Ascending aorta (tissue), 2 donors: ENCODE measurements at regions of chr10 and their contacts with region 1.

Region 1: GRCh38 chr10:124741281-124741921 is 2.8 kb downstream of the FAM53B start:
- DNase-seq: peak in 1 of 2 donors; percentile 93
- H3K4me3 ChIP-seq: peak overlapping the region; percentile 31 to 80
- H3K27ac ChIP-seq: peak overlapping the region; percentile 63 to 73
- H3K4me1 ChIP-seq: peaks cover 10 to 57% of the 10 kb centered on the region in 2 donors
- H3K27me3 ChIP-seq: no peaks in the 10 kb centered on the region
- CTCF ChIP-seq: peak; percentile 83 to 92 (median 87)

Region 2: DNA sequence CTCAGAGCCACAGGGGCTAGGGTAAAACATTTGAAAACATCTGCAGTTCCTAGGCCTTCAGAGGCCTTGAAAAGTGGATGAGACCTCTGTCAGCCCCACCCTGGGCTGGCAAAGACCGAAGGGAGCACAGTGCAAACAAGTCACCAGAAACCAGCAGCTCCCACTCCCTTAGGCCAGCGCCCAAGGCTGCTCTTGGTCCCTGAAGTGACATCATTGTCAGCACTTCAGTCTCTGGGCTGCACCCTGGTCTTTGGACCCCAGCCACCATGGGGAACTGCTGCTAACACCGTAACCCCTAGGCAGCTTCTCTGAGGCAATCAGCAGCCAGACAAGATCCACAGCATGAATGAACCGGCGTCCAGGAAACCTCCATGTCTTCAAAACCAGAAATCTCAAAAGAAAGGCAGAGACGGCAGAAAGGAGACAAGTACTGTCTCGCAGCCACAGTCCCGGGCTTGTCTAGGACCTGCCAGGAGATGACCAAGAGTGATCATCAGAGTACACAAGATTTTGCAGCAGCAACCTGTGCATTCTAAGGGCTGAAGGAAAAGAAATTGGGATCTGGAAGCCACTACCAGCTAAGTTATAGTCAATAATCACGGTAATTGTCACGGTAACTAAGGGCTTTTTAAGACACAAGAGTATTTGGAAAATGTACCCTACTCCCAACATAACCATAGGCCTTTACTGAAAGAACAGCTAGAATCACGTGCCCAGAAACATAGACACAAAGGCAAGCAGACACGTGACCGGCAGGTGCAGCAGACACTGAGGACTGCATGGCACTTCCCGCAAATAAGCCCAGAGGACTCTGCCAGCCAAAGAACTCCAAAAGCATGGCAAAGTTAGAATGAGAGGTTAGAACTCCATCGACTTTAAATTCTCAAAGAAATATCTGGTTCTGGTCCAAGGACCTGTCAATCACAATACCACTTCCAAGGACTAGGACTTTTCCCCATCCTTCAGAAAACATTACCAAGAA is 873.1 kb before region 1 on chr10:
- intact Hi-C with region 1: loop called (anchors 10 kb)
- DNase-seq: peak in 1 of 2 donors; percentile 63
- H3K4me3 ChIP-seq: no peak overlapping the region
- H3K27ac ChIP-seq: peak overlapping the region; percentile 40 to 65
- H3K4me1 ChIP-seq: peaks cover 31 to 40% of the 10 kb centered on the region in 2 donors
- H3K27me3 ChIP-seq: no peaks in the 10 kb centered on the region
- CTCF ChIP-seq: no peak

Region 3: DNA sequence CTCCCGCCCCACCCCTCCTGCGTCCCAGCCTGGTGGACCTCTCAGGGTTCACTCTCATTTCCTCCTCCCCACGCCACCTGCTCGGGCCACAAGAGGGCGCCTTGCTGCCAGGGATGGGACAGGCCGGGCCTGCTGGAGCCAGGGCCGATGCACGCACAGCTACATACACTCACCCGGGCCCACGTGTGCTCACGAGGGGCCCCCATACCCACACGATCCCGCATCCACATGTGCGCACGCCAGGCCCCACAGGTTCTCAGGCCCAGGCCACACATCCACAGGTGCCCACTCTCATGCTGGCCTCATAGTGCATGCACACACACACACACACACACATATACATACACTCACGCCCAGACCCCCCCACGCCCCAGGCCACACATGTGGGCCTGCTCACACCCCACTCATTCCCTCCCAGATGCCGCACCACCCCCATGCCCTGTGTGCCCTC is 211.2 kb before region 1 on chr10:
- intact Hi-C with region 1: loop called (anchors 1 kb)
- DNase-seq: peak; percentile 52 to 91
- H3K4me3 ChIP-seq: no peak overlapping the region
- H3K27ac ChIP-seq: no peak overlapping the region
- H3K4me1 ChIP-seq: no peaks in the 10 kb centered on the region
- H3K27me3 ChIP-seq: no peaks in the 10 kb centered on the region
- CTCF ChIP-seq: peak; percentile 81 to 95 (median 88)

Region 4: DNA sequence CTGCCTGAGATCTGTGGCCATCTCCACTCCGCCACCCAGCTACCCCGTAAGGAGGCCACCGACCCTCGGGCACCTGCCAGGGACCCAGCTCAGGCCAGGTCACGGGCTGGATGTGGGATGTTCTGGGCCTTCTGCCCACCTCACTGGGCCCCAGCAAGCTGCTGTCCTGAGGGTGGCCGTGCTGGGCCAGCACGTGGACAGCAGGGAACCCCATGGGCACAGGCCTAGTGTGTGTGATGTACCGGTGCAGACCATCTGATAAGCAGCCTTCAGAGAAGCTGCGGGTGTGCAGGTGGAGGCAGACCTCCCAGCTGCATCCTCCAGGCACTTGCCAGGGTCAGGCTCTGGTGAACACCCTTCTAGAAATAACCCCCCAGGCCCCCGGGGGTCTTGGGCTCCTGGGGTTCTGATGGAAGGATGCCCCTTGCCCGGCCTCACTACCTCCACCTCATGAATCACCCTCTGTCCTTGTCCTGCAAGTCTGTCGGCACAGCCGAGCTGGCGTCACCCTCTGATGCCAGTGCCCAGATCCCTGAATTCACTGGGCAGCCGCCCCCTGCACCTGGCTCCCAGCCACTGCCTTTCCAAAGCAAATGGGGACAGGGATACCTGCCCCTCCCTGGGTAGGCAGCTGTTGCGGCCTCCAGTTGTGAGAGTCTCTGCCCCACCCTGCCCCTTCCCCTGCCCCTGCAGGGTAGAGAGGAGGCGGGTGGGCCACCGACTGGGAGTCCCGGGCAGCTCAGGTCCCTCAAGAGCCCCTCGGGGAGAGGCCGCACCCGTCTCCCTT is 137.0 kb before region 1 on chr10:
- intact Hi-C with region 1: no loop called
- DNase-seq: no peak
- H3K4me3 ChIP-seq: no peak overlapping the region
- H3K27ac ChIP-seq: no peak overlapping the region
- H3K4me1 ChIP-seq: no peaks in the 10 kb centered on the region
- H3K27me3 ChIP-seq: no peaks in the 10 kb centered on the region
- CTCF ChIP-seq: no peak

Region 5: GRCh38 chr10:124632064-124632531 is 109.3 kb before region 1 on chr10:
- intact Hi-C with region 1: loop called (anchors 1 kb)
- DNase-seq: peak in 1 of 2 donors; percentile 72
- H3K4me3 ChIP-seq: no peak overlapping the region
- H3K27ac ChIP-seq: peak overlapping the region; percentile 2 to 72
- H3K4me1 ChIP-seq: peaks cover 15 to 37% of the 10 kb centered on the region in 2 donors
- H3K27me3 ChIP-seq: no peaks in the 10 kb centered on the region
- CTCF ChIP-seq: peak; percentile 1 to 49 (median 18)

Region 6: DNA sequence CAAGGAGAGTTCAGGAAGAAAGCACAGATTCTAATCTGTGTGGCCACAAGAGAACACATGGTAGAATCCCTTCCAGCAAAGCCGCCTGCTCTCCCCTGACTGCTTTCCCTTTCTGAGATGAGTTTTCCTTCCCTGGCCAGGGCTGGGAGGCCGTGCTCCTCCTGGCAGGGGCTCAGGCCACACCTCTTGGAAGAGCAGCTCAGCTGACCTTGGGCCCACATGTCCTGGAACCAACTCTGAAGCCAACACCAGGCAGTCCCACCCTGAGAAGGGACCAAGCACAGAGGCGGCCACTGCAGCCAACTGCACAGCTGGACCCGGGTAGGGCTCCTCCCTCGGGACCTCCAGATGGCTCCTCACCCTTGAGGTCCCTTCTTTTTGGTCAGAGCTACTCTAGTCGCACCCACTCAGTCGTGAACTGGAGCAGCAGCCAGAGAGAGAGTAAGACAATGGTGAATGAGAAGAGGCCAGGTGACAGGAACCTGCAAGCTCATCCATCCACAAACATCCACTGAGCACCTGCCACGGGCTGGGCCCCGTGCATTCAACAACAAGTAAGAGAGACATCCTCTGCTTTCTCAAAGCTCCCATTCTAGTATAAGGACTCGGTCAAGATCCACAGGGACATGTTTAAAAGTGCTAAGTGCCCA is 37.5 kb before region 1 on chr10:
- intact Hi-C with region 1: loop called (anchors 2 kb)
- DNase-seq: no peak
- H3K4me3 ChIP-seq: no peak overlapping the region
- H3K27ac ChIP-seq: peak overlapping the region; percentile 75 to 81
- H3K4me1 ChIP-seq: peaks cover 19 to 47% of the 10 kb centered on the region in 2 donors
- H3K27me3 ChIP-seq: no peaks in the 10 kb centered on the region
- CTCF ChIP-seq: no peak

Region 7: GRCh38 chr10:124916585-124917427 is 175.4 kb after region 1 on chr10:
- intact Hi-C with region 1: loop called (anchors 5 kb)
- DNase-seq: peak; percentile 91 to 99
- H3K4me3 ChIP-seq: peak overlapping the region; percentile 95 to 96
- H3K27ac ChIP-seq: peak overlapping the region; percentile 98
- H3K4me1 ChIP-seq: peaks cover 3 to 29% of the 10 kb centered on the region in 2 donors
- H3K27me3 ChIP-seq: no peaks in the 10 kb centered on the region
- CTCF ChIP-seq: peak in 1 of 3 experiments; percentile 6

Region 8: GRCh38 chr10:125160856-125161706 is 419.7 kb after region 1 on chr10:
- intact Hi-C with region 1: loop called (anchors 5 kb)
- DNase-seq: peak; percentile 56 to 90
- H3K4me3 ChIP-seq: peak overlapping the region; percentile 92 to 96
- H3K27ac ChIP-seq: peak overlapping the region; percentile 94 to 99
- H3K4me1 ChIP-seq: peaks cover 0 to 14% of the 10 kb centered on the region in 2 donors
- H3K27me3 ChIP-seq: no peaks in the 10 kb centered on the region
- CTCF ChIP-seq: peak; percentile 37 to 56 (median 41)